CD8-positive, alpha-beta T cell (primary cell): ENCODE measurements at regions of chr5 and their contacts with region 1.

Region 1: GRCh38 chr5:138035605-138036537 is 3.0 kb upstream of the FAM13B start:
- DNase-seq: peak; percentile 21 to 90 (median 61)
- ATAC-seq: peak; percentile 40
- H3K4me3 ChIP-seq: no peak overlapping the region
- H3K4me3 Mint-ChIP-seq: no peak overlapping the region
- H3K27ac ChIP-seq: no peak overlapping the region
- H3K27ac Mint-ChIP-seq: no peak overlapping the region
- H3K4me1 ChIP-seq: peaks cover 23% of the 10 kb centered on the region
- H3K4me1 Mint-ChIP-seq: peaks cover 30% of the 10 kb centered on the region
- H3K27me3 ChIP-seq: no peaks in the 10 kb centered on the region
- H3K27me3 Mint-ChIP-seq: no peaks in the 10 kb centered on the region
- CTCF ChIP-seq: peak; percentile 99

Region 2: GRCh38 chr5:137778772-137779564 is 256.9 kb before region 1 on chr5:
- CTCF ChIA-PET with region 1: interaction called, 10 read pairs
- POLR2A ChIA-PET with region 1: interaction called, 3 read pairs
- intact Hi-C with region 1: no loop called
- DNase-seq: peak in 2 of 9 experiments; percentile 39 to 52
- ATAC-seq: no peak
- H3K4me3 ChIP-seq: no peak overlapping the region
- H3K4me3 Mint-ChIP-seq: no peak overlapping the region
- H3K27ac ChIP-seq: no peak overlapping the region
- H3K27ac Mint-ChIP-seq: no peak overlapping the region
- H3K4me1 ChIP-seq: no peaks in the 10 kb centered on the region
- H3K4me1 Mint-ChIP-seq: no peaks in the 10 kb centered on the region
- H3K27me3 ChIP-seq: no peaks in the 10 kb centered on the region
- H3K27me3 Mint-ChIP-seq: no peaks in the 10 kb centered on the region
- CTCF ChIP-seq: peak; percentile 79

Region 3: DNA sequence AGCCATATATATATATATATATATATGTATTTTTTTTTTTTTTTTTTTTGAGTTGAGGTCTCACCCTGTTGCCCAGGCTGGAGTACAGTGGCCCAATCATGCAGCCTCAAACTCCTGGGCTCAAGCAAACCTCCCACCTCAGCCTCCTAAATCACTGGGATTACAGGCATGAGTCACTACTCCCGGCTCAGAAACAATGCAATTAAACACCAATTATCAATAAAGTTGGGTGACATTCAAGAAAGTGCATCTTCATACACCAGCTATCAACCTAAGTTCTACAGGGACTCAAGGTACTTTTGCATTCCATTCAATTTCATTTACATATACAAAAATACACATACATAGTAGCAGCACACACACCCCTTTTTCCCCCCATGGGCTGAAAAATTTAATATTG is 10.6 kb before region 1 on chr5:
- CTCF ChIA-PET with region 1: interaction called, 13 read pairs
- POLR2A ChIA-PET with region 1: no interaction called
- intact Hi-C with region 1: no loop called
- DNase-seq: no peak
- ATAC-seq: no peak
- H3K4me3 ChIP-seq: no peak overlapping the region
- H3K4me3 Mint-ChIP-seq: peak overlapping the region; percentile 19
- H3K27ac ChIP-seq: no peak overlapping the region
- H3K27ac Mint-ChIP-seq: no peak overlapping the region
- H3K4me1 ChIP-seq: peaks cover 74% of the 10 kb centered on the region
- H3K4me1 Mint-ChIP-seq: peaks cover 86% of the 10 kb centered on the region
- H3K27me3 ChIP-seq: no peaks in the 10 kb centered on the region
- H3K27me3 Mint-ChIP-seq: no peaks in the 10 kb centered on the region
- CTCF ChIP-seq: no peak

Region 4: DNA sequence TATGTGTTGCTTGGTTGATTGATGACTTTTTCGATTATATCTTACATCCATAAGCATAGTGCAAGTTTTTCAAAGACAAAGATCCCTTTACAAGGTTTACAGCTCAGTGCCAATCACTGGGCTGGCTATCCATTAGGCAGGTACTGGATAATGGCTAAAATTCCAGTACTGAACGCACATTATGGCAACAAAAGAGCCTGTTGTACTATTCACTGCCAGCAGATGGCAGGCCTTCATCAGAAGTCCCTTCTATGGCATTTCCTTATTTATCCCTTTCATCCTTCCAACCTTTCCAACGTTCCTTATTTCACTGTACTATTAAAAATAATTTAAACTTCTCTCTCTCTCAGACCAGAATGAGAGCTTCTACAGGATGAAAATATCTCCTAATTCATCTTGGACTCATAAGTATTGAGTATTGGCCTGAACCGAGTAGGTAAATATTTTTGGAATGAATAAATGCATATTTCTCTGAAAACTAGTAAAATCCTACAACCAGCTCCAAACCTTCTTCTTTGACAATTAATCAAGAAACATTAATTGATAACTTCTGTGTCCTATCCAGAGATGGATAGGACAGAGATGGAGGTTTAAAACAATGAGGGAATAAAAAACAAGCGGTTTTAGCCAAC is 41.3 kb after region 1 on chr5:
- CTCF ChIA-PET with region 1: interaction called, 35 read pairs
- POLR2A ChIA-PET with region 1: interaction called, 3 read pairs
- intact Hi-C with region 1: no loop called
- DNase-seq: peak; percentile 5 to 69 (median 48)
- ATAC-seq: peak; percentile 51
- H3K4me3 ChIP-seq: no peak overlapping the region
- H3K4me3 Mint-ChIP-seq: no peak overlapping the region
- H3K27ac ChIP-seq: no peak overlapping the region
- H3K27ac Mint-ChIP-seq: no peak overlapping the region
- H3K4me1 ChIP-seq: no peaks in the 10 kb centered on the region
- H3K4me1 Mint-ChIP-seq: peaks cover 8% of the 10 kb centered on the region
- H3K27me3 ChIP-seq: no peaks in the 10 kb centered on the region
- H3K27me3 Mint-ChIP-seq: no peaks in the 10 kb centered on the region
- CTCF ChIP-seq: peak; percentile 92

Region 5: DNA sequence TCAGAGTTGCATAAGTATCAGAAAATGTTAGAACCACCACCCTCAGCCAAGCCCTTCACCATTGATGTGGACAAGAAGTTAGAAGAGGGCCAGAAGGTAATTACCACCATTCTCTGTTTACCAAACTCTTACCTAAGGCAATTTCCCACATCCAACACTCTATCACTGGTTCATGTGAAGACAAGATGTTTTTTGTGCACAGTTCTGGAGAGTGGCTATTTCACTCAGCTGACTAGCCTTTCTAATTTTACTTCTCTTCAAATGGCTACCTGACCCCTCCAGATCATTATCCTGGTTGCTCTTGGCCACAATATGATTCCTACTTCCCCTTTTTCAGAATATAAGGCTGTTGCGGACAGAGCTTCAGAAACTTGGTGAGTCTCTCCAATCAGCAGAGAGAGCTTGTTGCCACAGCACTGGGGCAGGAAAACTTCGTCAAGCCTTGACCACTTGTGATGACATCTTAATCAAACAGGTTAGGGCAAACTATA is 150.1 kb after region 1 on chr5:
- CTCF ChIA-PET with region 1: no interaction called
- POLR2A ChIA-PET with region 1: no interaction called
- intact Hi-C with region 1: no loop called
- DNase-seq: no peak
- ATAC-seq: no peak
- H3K4me3 ChIP-seq: no peak overlapping the region
- H3K4me3 Mint-ChIP-seq: no peak overlapping the region
- H3K27ac ChIP-seq: no peak overlapping the region
- H3K27ac Mint-ChIP-seq: peak overlapping the region; percentile 10
- H3K4me1 ChIP-seq: no peaks in the 10 kb centered on the region
- H3K4me1 Mint-ChIP-seq: no peaks in the 10 kb centered on the region
- H3K27me3 ChIP-seq: no peaks in the 10 kb centered on the region
- H3K27me3 Mint-ChIP-seq: no peaks in the 10 kb centered on the region
- CTCF ChIP-seq: no peak

Region 6: DNA sequence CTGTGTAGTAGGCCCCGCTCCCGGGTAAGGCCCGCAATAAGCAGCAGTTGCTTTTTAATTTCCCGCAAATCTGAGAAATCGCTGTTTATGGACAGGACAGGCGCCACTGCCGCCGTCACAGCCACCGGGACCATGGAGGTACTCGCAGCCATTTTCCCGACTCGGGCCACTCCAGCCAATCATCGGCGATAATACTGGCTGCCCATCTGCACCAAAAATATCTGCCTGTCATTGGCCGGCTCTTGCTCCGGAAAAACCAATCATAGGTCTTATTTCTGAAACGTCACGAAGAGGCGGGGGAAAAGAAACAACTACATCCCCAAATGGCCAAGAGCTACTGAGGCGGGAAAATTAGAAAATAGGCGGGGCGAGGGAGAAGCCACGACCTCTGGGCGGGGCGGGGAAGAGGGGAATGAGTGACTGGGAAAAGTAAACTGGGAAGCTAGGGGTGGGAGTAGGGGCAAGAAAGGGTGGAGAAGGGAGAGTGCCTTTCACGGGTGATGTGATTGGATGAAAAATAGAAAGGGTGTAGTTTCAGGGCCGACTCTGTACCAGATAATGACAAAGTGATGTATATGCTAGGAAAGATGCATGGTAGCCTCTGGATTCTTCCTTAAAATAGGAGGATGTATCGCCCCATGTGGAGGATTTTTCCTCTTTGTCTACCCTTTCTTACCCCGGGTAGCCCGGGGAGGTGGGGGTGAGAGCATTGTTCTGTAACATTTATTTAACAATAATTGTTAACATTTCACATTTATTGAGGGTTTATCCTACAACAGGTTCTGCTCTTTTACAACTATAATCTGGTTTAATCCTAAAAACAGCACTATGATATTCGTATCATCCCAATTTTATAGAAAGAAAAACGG is 177.5 kb after region 1 on chr5 and contains the start of gene CDC23:
- CTCF ChIA-PET with region 1: no interaction called
- POLR2A ChIA-PET with region 1: no interaction called
- intact Hi-C with region 1: loop called (anchors 2 kb)
- DNase-seq: peak; percentile 76 to 97 (median 89)
- ATAC-seq: peak; percentile 97
- H3K4me3 ChIP-seq: peak within 1 kb of the TSS; percentile 91 to 93
- H3K4me3 Mint-ChIP-seq: peak within 1 kb of the TSS; percentile 100
- H3K27ac ChIP-seq: peak within 1 kb of the TSS; percentile 81 to 86
- H3K27ac Mint-ChIP-seq: peak within 1 kb of the TSS; percentile 98
- H3K4me1 ChIP-seq: peaks cover 18% of the 10 kb centered on the region
- H3K4me1 Mint-ChIP-seq: peaks cover 21% of the 10 kb centered on the region
- H3K27me3 ChIP-seq: no peaks in the 10 kb centered on the region
- H3K27me3 Mint-ChIP-seq: peaks cover 2% of the 10 kb centered on the region
- CTCF ChIP-seq: no peak
- total RNA-seq, gene CDC23: 18.2 to 20.5 TPM

Region 7: GRCh38 chr5:139392678-139393496 is 1357.0 kb after region 1 on chr5:
- CTCF ChIA-PET with region 1: no interaction called
- POLR2A ChIA-PET with region 1: no interaction called
- intact Hi-C with region 1: loop called in 1 of 2 experiments (anchors 5 kb)
- DNase-seq: peak; percentile 48 to 88 (median 75)
- ATAC-seq: peak; percentile 62
- H3K4me3 ChIP-seq: peak overlapping the region; percentile 72 to 84
- H3K4me3 Mint-ChIP-seq: peak overlapping the region; percentile 90
- H3K27ac ChIP-seq: peak overlapping the region in 1 of 2 experiments; percentile 29
- H3K27ac Mint-ChIP-seq: peak overlapping the region; percentile 60
- H3K4me1 ChIP-seq: peaks cover 44% of the 10 kb centered on the region
- H3K4me1 Mint-ChIP-seq: peaks cover 42% of the 10 kb centered on the region
- H3K27me3 ChIP-seq: no peaks in the 10 kb centered on the region
- H3K27me3 Mint-ChIP-seq: no peaks in the 10 kb centered on the region
- CTCF ChIP-seq: peak; percentile 62

Region 8: GRCh38 chr5:139670369-139671095 is 1634.7 kb after region 1 on chr5:
- CTCF ChIA-PET with region 1: no interaction called
- POLR2A ChIA-PET with region 1: no interaction called
- intact Hi-C with region 1: no loop called
- DNase-seq: peak in 5 of 9 experiments; percentile 34 to 68 (median 53)
- ATAC-seq: peak; percentile 31
- H3K4me3 ChIP-seq: peak overlapping the region; percentile 68 to 72
- H3K4me3 Mint-ChIP-seq: peak overlapping the region; percentile 79
- H3K27ac ChIP-seq: peak overlapping the region; percentile 26 to 88
- H3K27ac Mint-ChIP-seq: peak overlapping the region; percentile 90
- H3K4me1 ChIP-seq: peaks cover 53% of the 10 kb centered on the region
- H3K4me1 Mint-ChIP-seq: peaks cover 47% of the 10 kb centered on the region
- H3K27me3 ChIP-seq: no peaks in the 10 kb centered on the region
- H3K27me3 Mint-ChIP-seq: no peaks in the 10 kb centered on the region
- CTCF ChIP-seq: peak; percentile 28